ENCODE measurements at regions of chr20 and their contacts with region 1.

Region 1: GRCh38 chr20:10553326-10553984 is 118.3 kb downstream of the SLX4IP start:
- DNase-seq: no peak
- H3K4me3 ChIP-seq: no peak overlapping the region
- H3K27ac ChIP-seq: no peak overlapping the region
- H3K4me1 ChIP-seq: peaks cover 6 to 22% (median 16%) of the 10 kb centered on the region in 4 experiments
- H3K27me3 ChIP-seq: no peaks in the 10 kb centered on the region
- CTCF ChIP-seq: peak; percentile 15 to 81 (median 63)
- EP300 ChIP-seq: no peak
- POLR2A ChIP-seq: no peak
- RAD21 ChIP-seq: peak; percentile 83 to 89

Region 2: DNA sequence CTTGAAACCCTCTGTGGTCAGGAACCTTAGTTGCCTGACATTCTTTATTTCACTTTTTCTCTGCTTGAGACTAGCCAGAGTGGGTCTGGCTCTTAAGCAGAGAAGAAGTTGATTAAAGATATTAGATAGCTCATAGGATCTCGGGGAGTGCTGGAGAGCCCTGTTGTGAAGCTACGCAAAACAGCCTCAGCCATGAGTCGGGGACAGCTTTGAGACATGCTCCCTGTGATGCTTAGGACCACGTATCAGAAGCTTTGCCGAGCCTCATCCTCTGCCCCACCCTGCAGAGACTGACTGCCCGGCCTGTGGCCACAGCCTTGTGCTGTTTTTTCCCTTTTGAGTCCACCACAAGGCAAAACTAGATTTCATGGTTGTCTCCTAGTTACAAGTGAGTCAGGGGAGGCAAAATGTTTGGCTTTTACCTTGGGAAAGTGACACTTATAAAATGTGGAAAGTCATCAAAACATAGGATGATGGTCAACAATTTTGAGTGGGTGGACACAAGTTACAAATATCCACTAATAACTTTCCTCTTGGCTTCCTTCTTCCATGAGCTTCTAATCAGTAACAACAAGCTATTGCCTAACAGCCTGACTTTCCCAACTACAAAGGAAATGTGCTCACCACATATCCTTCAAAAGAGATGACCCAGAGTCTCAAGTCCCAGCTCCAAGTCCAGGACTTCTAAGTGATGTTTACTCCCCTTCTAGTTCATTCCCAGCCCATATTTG is 11.9 kb after region 1 on chr20:
- CTCF ChIA-PET with region 1: interaction called, 10 read pairs
- POLR2A ChIA-PET with region 1: no interaction called
- DNase-seq: no peak
- H3K4me3 ChIP-seq: no peak overlapping the region
- H3K27ac ChIP-seq: no peak overlapping the region
- H3K4me1 ChIP-seq: peaks cover 0 to 4% (median 0%) of the 10 kb centered on the region in 4 experiments; a peak in 1 of 7 replicates
- H3K27me3 ChIP-seq: no peaks in the 10 kb centered on the region
- CTCF ChIP-seq: no peak
- EP300 ChIP-seq: no peak
- POLR2A ChIP-seq: no peak
- RAD21 ChIP-seq: no peak

Region 3: GRCh38 chr20:10682939-10683338 is 129.5 kb after region 1 on chr20:
- CTCF ChIA-PET with region 1: no interaction called
- POLR2A ChIA-PET with region 1: no interaction called
- DNase-seq: no peak
- H3K4me3 ChIP-seq: no peak overlapping the region
- H3K27ac ChIP-seq: no peak overlapping the region
- H3K4me1 ChIP-seq: no peaks in the 10 kb centered on the region
- H3K27me3 ChIP-seq: no peaks in the 10 kb centered on the region
- CTCF ChIP-seq: no peak
- EP300 ChIP-seq: no peak
- POLR2A ChIP-seq: no peak
- RAD21 ChIP-seq: no peak

Measured in H1 (cell line).